ENCODE measurements at regions of chr6 and their contacts with region 1.

Region 1: DNA sequence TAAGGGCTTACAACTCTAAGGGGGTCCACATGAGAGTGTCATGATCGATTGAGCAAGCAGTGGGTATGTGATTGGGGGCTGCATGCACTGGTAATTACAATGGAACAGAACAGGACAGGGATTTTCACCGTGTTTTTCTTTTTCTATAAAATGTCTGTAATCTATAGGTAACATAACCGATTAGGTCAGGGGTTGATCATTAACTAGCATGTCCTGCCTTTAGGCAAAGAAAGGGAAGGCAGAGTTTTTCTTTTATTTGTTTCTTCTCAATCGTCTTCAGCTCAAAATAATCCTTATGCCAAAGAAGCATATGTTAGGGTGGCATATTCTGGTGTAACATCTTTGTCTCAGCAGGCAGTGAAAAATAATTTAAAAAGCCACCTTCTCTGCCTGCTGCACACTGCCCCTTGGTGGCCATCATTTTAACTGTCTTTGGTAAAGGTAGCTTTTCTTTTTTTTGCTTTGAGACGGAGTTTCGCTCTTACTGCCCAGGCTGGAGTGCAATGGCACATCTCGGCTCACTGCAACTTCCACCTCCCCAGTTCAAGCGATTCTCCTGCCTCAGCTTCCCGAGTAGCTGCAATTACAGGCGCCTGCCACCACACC is 9.7 kb upstream of the CEP43 start:
- DNase-seq: peak; percentile 22 to 81 (median 46)
- ATAC-seq: peak; percentile 90
- H3K4me3 ChIP-seq: no peak overlapping the region
- H3K4me3 Mint-ChIP-seq: peak overlapping the region in 1 of 10 donors; percentile 62
- H3K27ac ChIP-seq: no peak overlapping the region
- H3K27ac Mint-ChIP-seq: peak overlapping the region in 4 of 9 donors; percentile 11 to 93 (median 38)
- H3K4me1 ChIP-seq: peaks cover 0 to 15% of the 10 kb centered on the region in 2 donors
- H3K4me1 Mint-ChIP-seq: peaks cover 11 to 37% (median 28%) of the 10 kb centered on the region in 7 donors
- H3K27me3 ChIP-seq: no peaks in the 10 kb centered on the region
- H3K27me3 Mint-ChIP-seq: no peaks in the 10 kb centered on the region

Region 2: DNA sequence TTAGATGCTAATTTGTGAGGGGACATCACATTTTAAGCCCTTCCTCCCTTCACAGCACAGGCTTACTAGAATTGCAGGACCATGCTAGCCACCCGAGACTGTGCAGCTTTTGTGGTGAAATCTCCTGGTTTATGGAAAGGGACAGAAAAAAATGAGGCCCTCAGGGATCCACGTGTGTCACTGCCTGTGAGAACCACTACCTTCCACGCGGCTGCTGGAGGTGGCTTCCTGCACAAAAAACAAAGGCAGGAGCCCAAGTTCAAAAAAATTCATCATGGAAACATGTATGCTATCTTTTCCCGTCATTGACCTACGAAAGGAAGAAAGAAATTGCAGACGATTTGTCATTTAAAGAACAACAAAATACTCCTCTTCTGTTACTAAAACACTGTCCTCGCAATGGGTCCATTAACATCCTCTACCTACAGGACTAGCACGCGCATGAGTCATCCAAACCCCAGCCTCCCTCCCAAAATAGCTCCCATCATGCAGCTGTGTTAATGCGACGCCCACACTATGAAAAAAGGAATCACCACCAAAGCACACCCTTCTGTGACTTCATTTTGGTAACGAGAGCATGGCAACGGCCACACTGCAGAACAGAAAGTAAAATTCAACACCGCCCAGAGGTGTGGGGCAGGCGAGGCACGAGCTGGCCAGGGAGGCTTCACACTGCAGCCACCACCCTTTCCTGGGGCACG is 448.7 kb before region 1 on chr6:
- CTCF ChIA-PET with region 1: no interaction called
- POLR2A ChIA-PET with region 1: no interaction called
- intact Hi-C with region 1: no loop called
- DNase-seq: peak in 7 of 9 donors; percentile 3 to 48 (median 25)
- ATAC-seq: peak; percentile 87
- H3K4me3 ChIP-seq: peak overlapping the region; percentile 22
- H3K4me3 Mint-ChIP-seq: peak overlapping the region in 9 of 10 donors; percentile 22 to 78 (median 76)
- H3K27ac ChIP-seq: peak overlapping the region; percentile 50
- H3K27ac Mint-ChIP-seq: peak overlapping the region in 8 of 9 donors; percentile 12 to 89 (median 84)
- H3K4me1 ChIP-seq: peaks cover 13 to 14% of the 10 kb centered on the region in 2 donors
- H3K4me1 Mint-ChIP-seq: peaks cover 16 to 38% (median 28%) of the 10 kb centered on the region in 7 donors
- H3K27me3 ChIP-seq: no peaks in the 10 kb centered on the region
- H3K27me3 Mint-ChIP-seq: no peaks in the 10 kb centered on the region

Region 3: DNA sequence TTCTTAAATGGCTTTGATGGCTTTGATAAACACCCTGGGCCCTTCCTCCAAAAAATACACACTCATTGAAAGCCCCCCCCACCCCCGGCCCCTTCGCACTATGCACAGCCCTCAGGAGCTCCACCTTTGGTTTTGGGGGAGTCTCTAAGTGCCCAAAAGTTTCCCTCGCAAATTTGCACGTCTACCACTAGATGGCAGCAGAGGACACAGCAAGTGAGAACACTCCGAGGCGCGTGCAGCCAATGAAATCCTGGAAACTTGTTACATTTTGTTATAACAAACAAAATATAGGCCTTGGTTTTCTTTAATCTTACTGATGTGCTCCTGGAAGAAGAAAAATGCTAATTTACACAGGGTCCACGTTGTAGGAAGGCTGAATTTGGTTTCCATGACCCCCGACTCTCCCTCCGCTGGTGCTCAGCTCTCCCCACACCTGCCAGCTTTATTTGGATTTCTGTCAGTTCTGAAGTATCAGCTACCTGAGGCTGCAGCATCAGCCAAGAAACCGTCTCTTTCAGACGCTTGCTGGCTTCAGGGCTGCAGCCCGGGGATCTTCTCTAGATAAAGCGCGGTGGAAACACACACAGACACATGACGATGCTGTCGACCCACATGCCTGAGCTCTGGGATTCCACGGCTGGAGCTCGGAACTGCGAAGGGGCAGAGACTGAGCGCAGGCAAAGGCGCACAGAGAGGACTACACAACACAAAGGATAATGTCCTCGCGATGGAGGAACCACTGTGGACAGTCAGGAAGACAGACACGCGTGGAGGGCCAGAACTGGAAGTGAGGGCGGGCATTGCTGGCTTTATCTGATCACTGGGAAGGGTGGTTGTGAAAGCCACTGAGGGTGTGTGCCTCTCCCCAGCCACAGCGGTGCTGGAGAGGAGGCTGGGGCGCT is 214.1 kb before region 1 on chr6:
- CTCF ChIA-PET with region 1: interaction called, 27 read pairs
- POLR2A ChIA-PET with region 1: no interaction called
- intact Hi-C with region 1: loop called (anchors 1 kb)
- DNase-seq: peak; percentile 24 to 82 (median 71)
- ATAC-seq: peak; percentile 91
- H3K4me3 ChIP-seq: no peak overlapping the region
- H3K4me3 Mint-ChIP-seq: no peak overlapping the region
- H3K27ac ChIP-seq: no peak overlapping the region
- H3K27ac Mint-ChIP-seq: peak overlapping the region in 1 of 9 donors; percentile 61
- H3K4me1 ChIP-seq: no peaks in the 10 kb centered on the region
- H3K4me1 Mint-ChIP-seq: peaks cover 0 to 9% (median 5%) of the 10 kb centered on the region in 7 donors
- H3K27me3 ChIP-seq: no peaks in the 10 kb centered on the region
- H3K27me3 Mint-ChIP-seq: peaks cover 0 to 8% (median 0%) of the 10 kb centered on the region in 5 donors

Region 4: GRCh38 chr6:166830185-166830890 is 159.2 kb before region 1 on chr6:
- CTCF ChIA-PET with region 1: no interaction called
- POLR2A ChIA-PET with region 1: no interaction called
- intact Hi-C with region 1: no loop called
- DNase-seq: no peak
- ATAC-seq: peak; percentile 69
- H3K4me3 ChIP-seq: no peak overlapping the region
- H3K4me3 Mint-ChIP-seq: no peak overlapping the region
- H3K27ac ChIP-seq: no peak overlapping the region
- H3K27ac Mint-ChIP-seq: peak overlapping the region in 1 of 9 donors; percentile 80
- H3K4me1 ChIP-seq: no peaks in the 10 kb centered on the region
- H3K4me1 Mint-ChIP-seq: peaks cover 0 to 11% (median 0%) of the 10 kb centered on the region in 7 donors
- H3K27me3 ChIP-seq: no peaks in the 10 kb centered on the region
- H3K27me3 Mint-ChIP-seq: no peaks in the 10 kb centered on the region

Region 5: DNA sequence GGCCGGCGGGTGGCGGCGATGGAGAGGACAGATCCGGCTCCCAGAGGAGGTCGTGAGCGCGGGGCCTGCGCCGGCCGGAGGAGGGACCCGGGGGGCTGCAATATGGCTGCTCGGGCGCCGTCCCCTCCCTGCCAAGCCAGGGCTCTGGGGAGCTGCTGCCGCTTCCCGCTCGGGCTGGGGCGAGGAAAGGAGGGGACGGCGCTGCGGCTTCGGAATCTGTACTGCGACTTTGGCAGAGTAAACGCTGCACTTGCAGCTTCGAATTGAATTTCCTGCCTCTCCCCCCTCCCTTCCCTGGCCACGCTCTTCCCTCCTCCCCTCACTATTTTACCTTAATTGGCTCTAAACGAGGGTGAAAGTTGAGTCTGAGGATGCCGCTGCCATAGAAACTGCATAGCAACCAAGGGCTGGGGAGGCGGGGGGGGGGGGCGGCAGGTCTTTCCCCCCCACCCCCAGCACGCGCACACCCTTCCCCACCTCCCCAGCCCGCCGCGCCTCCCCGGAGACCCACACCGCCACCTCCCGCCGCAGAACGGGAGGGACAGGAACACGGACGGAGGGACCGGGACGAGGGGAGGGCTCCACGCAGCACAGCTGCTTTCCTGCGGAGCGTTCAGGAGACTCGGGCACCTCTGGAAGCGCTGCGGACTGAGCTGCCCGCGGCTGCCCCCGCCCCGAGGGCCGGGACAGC is 127.1 kb before region 1 on chr6:
- CTCF ChIA-PET with region 1: no interaction called
- POLR2A ChIA-PET with region 1: no interaction called
- intact Hi-C with region 1: loop called (anchors 2 to 5 kb)
- DNase-seq: peak; percentile 13 to 59 (median 34)
- ATAC-seq: peak; percentile 85
- H3K4me3 ChIP-seq: peak overlapping the region; percentile 47
- H3K4me3 Mint-ChIP-seq: peak overlapping the region; percentile 70 to 95 (median 90)
- H3K27ac ChIP-seq: peak overlapping the region; percentile 6
- H3K27ac Mint-ChIP-seq: peak overlapping the region in 4 of 9 donors; percentile 31 to 79 (median 62)
- H3K4me1 ChIP-seq: peaks cover 3 to 4% of the 10 kb centered on the region in 2 donors
- H3K4me1 Mint-ChIP-seq: peaks cover 7 to 24% (median 8%) of the 10 kb centered on the region in 7 donors
- H3K27me3 ChIP-seq: no peaks in the 10 kb centered on the region
- H3K27me3 Mint-ChIP-seq: peaks cover 0 to 40% (median 7%) of the 10 kb centered on the region in 5 donors

Region 6: GRCh38 chr6:166940643-166941068 is 48.9 kb before region 1 on chr6:
- CTCF ChIA-PET with region 1: interaction called, 39 read pairs
- POLR2A ChIA-PET with region 1: interaction called, 6 read pairs
- intact Hi-C with region 1: loop called in 1 of 2 experiments (anchors 5 kb)
- DNase-seq: no peak
- ATAC-seq: no peak
- H3K4me3 ChIP-seq: no peak overlapping the region
- H3K4me3 Mint-ChIP-seq: no peak overlapping the region
- H3K27ac ChIP-seq: no peak overlapping the region
- H3K27ac Mint-ChIP-seq: peak overlapping the region in 7 of 9 donors; percentile 21 to 96 (median 65)
- H3K4me1 ChIP-seq: peaks cover 0 to 21% of the 10 kb centered on the region in 2 donors
- H3K4me1 Mint-ChIP-seq: peaks cover 16 to 60% (median 32%) of the 10 kb centered on the region in 7 donors
- H3K27me3 ChIP-seq: no peaks in the 10 kb centered on the region
- H3K27me3 Mint-ChIP-seq: no peaks in the 10 kb centered on the region

Region 7: DNA sequence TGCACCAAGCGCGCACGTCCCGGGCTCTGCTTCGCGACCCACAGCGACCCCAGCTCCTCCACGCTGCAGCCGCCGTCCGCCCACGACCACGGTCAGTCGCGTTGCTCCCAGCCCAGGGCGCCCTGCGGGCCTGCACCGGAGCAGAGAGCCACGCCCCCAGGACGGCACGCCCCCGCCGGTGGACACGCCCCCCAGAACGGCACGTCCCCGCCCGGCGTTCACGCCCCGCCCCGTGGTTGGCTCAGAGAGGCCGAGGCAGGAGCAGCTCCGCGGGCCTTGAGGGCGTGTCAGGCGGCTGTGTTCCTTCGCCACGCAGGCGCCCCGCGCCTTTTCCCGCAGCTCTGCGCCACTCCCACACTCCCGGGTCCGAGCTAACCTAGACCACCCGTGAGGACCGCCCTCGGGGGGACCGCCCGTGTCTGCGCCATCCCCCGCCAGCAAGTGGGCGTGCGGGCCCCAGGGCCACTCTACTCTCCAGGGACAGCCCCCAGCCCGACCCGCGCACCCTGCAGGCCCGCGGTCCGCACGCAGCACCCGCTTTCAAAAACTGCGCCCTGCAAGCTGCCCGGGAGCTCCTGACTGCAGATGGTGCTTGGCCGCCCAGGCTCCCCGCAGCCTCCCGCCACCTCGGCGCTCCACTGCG is 33.0 kb before region 1 on chr6 and contains the start of gene RNASET2:
- CTCF ChIA-PET with region 1: interaction called, 47 read pairs
- POLR2A ChIA-PET with region 1: interaction called, 42 read pairs
- intact Hi-C with region 1: loop called (anchors 1 kb)
- DNase-seq: peak; percentile 95 to 100 (median 99)
- ATAC-seq: peak; percentile 93
- H3K4me3 ChIP-seq: peak within 1 kb of the TSS; percentile 86
- H3K4me3 Mint-ChIP-seq: peak within 1 kb of the TSS; percentile 87 to 99 (median 96)
- H3K27ac ChIP-seq: peak within 1 kb of the TSS; percentile 92
- H3K27ac Mint-ChIP-seq: peak within 1 kb of the TSS; percentile 95 to 99 (median 99)
- H3K4me1 ChIP-seq: peaks cover 41 to 66% of the 10 kb centered on the region in 2 donors
- H3K4me1 Mint-ChIP-seq: peaks cover 56 to 79% (median 73%) of the 10 kb centered on the region in 7 donors
- H3K27me3 ChIP-seq: no peaks in the 10 kb centered on the region
- H3K27me3 Mint-ChIP-seq: no peaks in the 10 kb centered on the region
- total RNA-seq, gene RNASET2: 147 to 332 (median 264) TPM

Region 8: GRCh38 chr6:167141667-167142432 is 152.3 kb after region 1 on chr6:
- CTCF ChIA-PET with region 1: interaction called, 16 read pairs
- POLR2A ChIA-PET with region 1: no interaction called
- intact Hi-C with region 1: loop called in 1 of 2 experiments (anchors 1 kb)
- DNase-seq: peak; percentile 9 to 54 (median 41)
- ATAC-seq: peak; percentile 84
- H3K4me3 ChIP-seq: no peak overlapping the region
- H3K4me3 Mint-ChIP-seq: no peak overlapping the region
- H3K27ac ChIP-seq: no peak overlapping the region
- H3K27ac Mint-ChIP-seq: no peak overlapping the region
- H3K4me1 ChIP-seq: peaks cover 0 to 4% of the 10 kb centered on the region in 2 donors
- H3K4me1 Mint-ChIP-seq: peaks cover 0 to 6% (median 0%) of the 10 kb centered on the region in 7 donors
- H3K27me3 ChIP-seq: no peaks in the 10 kb centered on the region
- H3K27me3 Mint-ChIP-seq: peaks cover 0 to 21% (median 12%) of the 10 kb centered on the region in 5 donors

Measured in naive thymus-derived CD4-positive, alpha-beta T cell (primary cell).